Activated B cell treated with CpG ODN at 0.5 μM for 24 hours (primary cell): ENCODE measurements at regions of chr1 and their contacts with region 1.

Region 1: DNA sequence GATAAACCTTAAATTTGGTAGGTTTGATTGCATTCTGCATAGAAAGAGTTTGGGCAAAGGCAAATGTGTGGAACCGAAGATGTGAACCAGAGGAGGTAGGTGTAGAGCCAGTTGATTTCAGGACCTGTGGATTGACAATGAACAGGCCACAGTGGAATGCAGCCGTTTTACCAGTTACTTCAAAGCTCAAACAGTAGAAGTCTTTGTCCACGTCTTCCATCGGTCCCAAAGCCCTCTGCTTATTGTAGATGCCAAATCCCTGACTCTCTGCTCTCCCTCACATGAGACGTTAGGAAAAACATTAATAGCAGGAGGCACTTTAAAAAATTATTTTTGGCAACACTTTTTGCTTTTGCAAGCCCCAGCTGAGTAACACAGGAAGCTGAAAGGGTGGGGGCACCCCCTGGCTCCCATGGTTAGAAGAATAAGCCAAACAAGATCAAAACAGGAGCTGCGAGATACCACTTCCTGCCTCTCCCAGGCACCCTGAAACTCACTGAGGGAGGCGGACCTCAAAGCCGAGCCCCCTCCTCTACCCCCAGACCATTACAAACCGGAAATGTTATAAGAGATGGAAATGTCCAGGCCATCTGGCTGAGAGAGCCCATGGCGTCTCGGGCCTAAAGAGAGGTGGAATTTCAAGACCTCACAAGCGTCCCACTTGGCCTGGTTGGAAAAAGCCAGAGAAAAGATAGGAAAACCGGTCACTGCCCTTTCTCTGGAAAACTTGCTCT is 13.5 kb downstream of the TRAF3IP3 start:
- DNase-seq: no peak
- ATAC-seq: peak; percentile 43
- H3K4me3 Mint-ChIP-seq: no peak overlapping the region
- H3K27ac Mint-ChIP-seq: no peak overlapping the region
- H3K4me1 Mint-ChIP-seq: peaks cover 16% of the 10 kb centered on the region
- H3K27me3 Mint-ChIP-seq: no peaks in the 10 kb centered on the region
- CTCF ChIP-seq: no peak

Region 2: DNA sequence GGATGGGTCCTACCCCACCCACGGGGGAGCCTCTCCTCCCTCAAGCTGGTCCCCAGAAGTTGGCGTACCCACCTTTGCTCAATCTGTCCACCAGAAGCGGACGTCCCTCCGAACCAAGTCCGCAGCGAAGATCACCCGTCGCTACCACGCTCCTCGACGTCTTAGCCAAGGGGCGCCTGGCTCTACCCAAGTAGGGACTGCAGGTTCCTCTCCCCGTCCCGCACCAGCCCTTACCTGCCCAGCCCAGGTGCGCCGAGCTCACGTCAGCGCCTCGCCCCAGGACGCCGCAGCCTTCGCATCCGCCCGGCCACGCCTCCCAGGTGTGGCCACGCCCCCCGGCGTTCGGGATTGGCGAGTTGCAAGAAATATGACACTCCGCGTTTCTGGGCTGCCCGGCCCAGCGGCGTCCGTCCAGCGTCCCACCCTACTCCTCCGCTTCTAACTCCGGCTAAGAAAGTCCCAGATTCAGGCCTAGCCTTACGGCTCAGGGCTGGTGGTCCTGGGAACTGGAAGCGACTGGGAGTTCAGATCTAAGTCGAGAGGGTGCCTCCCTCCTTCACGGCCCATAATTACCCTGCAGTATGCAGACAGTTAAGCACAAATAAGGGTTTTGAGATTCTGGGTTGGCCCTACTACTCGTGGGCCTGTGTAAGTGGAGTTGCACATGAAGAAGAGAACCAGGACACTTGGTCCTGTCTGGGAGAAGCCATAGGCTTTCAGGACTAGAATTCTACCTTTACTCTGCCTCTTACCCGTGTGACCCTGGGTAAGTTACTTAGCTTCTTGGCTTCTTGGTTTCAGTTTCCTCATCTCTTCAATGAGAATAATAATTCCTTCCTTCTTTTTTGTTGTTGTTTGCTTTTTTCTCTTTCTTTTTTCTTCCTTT is 36.8 kb after region 1 on chr1 and contains the start of gene IRF6:
- CTCF ChIA-PET with region 1: no interaction called
- POLR2A ChIA-PET with region 1: interaction called, 5 read pairs
- intact Hi-C with region 1: loop called (anchors 1 kb)
- DNase-seq: peak; percentile 69
- ATAC-seq: peak; percentile 94
- H3K4me3 Mint-ChIP-seq: peak within 1 kb of the TSS; percentile 96
- H3K27ac Mint-ChIP-seq: peak within 1 kb of the TSS; percentile 81
- H3K4me1 Mint-ChIP-seq: peaks cover 7% of the 10 kb centered on the region
- H3K27me3 Mint-ChIP-seq: peaks cover 21% of the 10 kb centered on the region
- CTCF ChIP-seq: no peak
- total RNA-seq, gene IRF6: 0.42 and 0.81 TPM in 2 replicates